MCF 10A (cell line): ENCODE measurements at regions of chr3 and their contacts with region 1.

Region 1: DNA sequence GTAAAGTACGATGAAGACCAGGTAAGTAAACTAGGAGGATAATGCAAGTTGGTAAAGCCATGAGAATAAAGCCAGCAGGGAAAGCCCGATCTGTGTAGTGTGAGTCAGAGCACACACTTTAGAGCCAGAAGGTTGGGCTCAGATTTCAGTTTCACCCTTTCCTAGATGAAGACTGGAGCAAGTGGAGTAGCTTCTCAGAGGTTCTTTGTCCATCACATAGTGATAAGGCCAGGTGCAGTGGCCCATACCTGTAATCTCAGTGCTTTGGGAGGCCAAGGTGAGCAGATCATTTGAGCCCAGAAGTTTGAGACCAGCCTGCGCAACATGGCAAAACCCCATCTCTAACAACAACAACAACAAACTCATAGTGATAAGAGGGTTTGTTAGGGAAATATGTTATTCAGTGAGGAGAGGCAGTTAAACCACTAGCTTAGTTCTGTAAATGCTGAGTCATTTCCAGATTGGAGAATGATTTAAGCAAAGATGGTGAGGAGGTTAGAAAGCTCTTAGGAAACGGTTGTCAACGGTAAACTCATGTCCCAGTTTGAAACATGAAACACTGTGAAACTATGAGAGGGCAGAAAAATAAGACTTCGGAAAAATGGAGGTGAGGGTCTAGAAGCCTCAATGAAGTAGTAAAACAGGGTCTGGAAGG is 39.0 kb downstream of the IL12A start:
- DNase-seq: peak; percentile 56
- H3K4me3 Mint-ChIP-seq: no peak overlapping the region
- H3K27ac Mint-ChIP-seq: no peak overlapping the region
- H3K4me1 Mint-ChIP-seq: peaks cover 13% of the 10 kb centered on the region
- H3K27me3 Mint-ChIP-seq: no peaks in the 10 kb centered on the region
- CTCF ChIP-seq: no peak

Region 2: GRCh38 chr3:159783777-159784743 is 243.6 kb before region 1 on chr3:
- CTCF ChIA-PET with region 1: no interaction called
- POLR2A ChIA-PET with region 1: no interaction called
- intact Hi-C with region 1: no loop called
- DNase-seq: peak; percentile 58
- H3K4me3 Mint-ChIP-seq: peak overlapping the region; percentile 50
- H3K27ac Mint-ChIP-seq: peak overlapping the region; percentile 89
- H3K4me1 Mint-ChIP-seq: peaks cover 58% of the 10 kb centered on the region
- H3K27me3 Mint-ChIP-seq: no peaks in the 10 kb centered on the region
- CTCF ChIP-seq: no peak

Region 3: DNA sequence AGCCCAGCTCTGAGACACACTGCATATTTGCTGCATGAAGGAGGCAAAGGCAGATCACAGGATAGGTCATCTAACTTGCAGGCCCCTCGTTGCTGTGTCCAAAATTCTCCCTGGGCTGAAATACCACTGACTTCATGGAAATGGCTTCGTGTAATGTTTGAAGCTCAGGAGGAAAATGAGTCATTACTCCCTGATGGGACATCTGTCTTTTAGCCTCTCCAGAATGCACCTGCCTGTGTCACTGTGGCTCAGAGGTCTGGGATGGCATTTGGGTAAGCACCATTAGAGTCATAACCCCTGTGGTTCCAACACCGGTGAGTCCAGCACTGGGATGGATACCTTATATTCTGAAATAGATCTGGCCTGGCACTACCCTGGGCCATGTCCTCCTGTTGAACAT is 12.5 kb after region 1 on chr3:
- CTCF ChIA-PET with region 1: interaction called, 23 read pairs
- POLR2A ChIA-PET with region 1: interaction called, 5 read pairs
- intact Hi-C with region 1: no loop called
- DNase-seq: peak; percentile 4
- H3K4me3 Mint-ChIP-seq: no peak overlapping the region
- H3K27ac Mint-ChIP-seq: no peak overlapping the region
- H3K4me1 Mint-ChIP-seq: no peaks in the 10 kb centered on the region
- H3K27me3 Mint-ChIP-seq: no peaks in the 10 kb centered on the region
- CTCF ChIP-seq: no peak

Region 4: DNA sequence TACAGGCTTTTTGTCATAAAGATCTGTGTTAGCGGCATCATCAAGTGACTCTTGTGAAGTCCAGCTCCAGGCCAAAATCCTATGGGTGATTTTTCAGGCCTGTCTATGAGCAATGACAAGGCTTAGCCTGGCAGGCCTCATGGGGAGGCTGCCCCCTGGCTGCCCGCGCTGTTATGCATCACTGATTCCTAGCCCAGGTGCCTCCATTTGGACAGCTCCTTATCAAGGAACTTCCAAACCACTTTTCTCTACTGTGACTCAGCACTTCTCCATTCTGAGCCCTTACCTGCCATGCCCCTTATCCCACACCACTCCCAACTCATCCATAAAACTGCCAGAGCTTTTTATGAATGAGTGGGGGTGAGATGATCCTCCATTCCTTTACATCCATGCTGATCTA is 106.1 kb after region 1 on chr3:
- CTCF ChIA-PET with region 1: interaction called, 14 read pairs
- POLR2A ChIA-PET with region 1: interaction called, 3 read pairs
- intact Hi-C with region 1: no loop called
- DNase-seq: peak; percentile 27
- H3K4me3 Mint-ChIP-seq: no peak overlapping the region
- H3K27ac Mint-ChIP-seq: no peak overlapping the region
- H3K4me1 Mint-ChIP-seq: peaks cover 34% of the 10 kb centered on the region
- H3K27me3 Mint-ChIP-seq: no peaks in the 10 kb centered on the region
- CTCF ChIP-seq: no peak

Region 5: GRCh38 chr3:160210799-160211221 is 183.1 kb after region 1 on chr3:
- CTCF ChIA-PET with region 1: interaction called, 6 read pairs
- POLR2A ChIA-PET with region 1: no interaction called
- intact Hi-C with region 1: loop called (anchors 1 kb)
- DNase-seq: peak; percentile 56
- H3K4me3 Mint-ChIP-seq: no peak overlapping the region
- H3K27ac Mint-ChIP-seq: no peak overlapping the region
- H3K4me1 Mint-ChIP-seq: peaks cover 7% of the 10 kb centered on the region
- H3K27me3 Mint-ChIP-seq: no peaks in the 10 kb centered on the region
- CTCF ChIP-seq: peak; percentile 37

Region 6: GRCh38 chr3:160343132-160343531 is 315.5 kb after region 1 on chr3:
- CTCF ChIA-PET with region 1: interaction called, 21 read pairs
- POLR2A ChIA-PET with region 1: no interaction called
- intact Hi-C with region 1: loop called (anchors 1 kb)
- DNase-seq: peak; percentile 36
- H3K4me3 Mint-ChIP-seq: no peak overlapping the region
- H3K27ac Mint-ChIP-seq: no peak overlapping the region
- H3K4me1 Mint-ChIP-seq: no peaks in the 10 kb centered on the region
- H3K27me3 Mint-ChIP-seq: no peaks in the 10 kb centered on the region
- CTCF ChIP-seq: peak; percentile 47

Region 7: DNA sequence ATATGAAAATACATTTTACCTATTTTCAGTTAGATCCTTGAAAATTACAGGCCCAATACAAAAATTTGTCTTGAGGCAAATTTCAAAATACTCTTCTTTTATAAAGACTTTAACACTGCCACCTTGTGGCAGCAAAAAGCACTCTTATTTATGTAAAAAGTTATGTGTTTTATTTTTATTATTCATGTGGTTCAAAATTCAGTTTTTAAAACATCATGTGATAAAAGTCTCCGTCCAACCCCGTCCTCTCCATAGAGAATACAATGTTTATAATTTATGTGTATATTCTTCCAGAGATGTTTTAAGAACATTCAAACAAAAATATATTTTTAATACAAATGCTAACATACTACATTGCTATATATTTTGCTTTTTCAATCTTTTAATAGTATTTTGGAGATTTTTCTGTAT is 458.8 kb after region 1 on chr3:
- CTCF ChIA-PET with region 1: no interaction called
- POLR2A ChIA-PET with region 1: no interaction called
- intact Hi-C with region 1: loop called (anchors 2 kb)
- DNase-seq: peak; percentile 53
- H3K4me3 Mint-ChIP-seq: no peak overlapping the region
- H3K27ac Mint-ChIP-seq: no peak overlapping the region
- H3K4me1 Mint-ChIP-seq: no peaks in the 10 kb centered on the region
- H3K27me3 Mint-ChIP-seq: no peaks in the 10 kb centered on the region
- CTCF ChIP-seq: peak; percentile 61